CD4-positive, alpha-beta T cell (primary cell): ENCODE measurements at regions of chr1 and their contacts with region 1.

Region 1: DNA sequence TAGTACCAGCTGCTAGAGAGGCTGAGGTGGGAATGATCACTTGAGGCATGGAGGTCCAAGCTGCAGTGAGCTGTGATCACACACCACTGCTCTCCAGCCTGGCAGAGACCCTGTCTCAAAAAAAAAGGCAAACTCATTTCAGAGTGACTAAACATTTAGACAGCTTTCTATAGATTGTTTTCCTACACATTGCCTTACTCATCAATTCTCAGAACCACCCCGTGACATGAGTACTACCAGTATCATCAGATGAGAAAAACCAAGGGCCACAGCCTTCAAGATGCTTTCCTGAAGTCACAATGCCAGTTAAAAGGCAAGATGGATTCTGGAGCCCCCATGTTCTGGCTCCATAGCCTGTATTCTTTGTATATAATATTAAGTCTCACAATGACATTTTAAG is 22.4 kb upstream of the SMPDL3B start:
- DNase-seq: no peak
- ATAC-seq: no peak
- H3K4me3 ChIP-seq: no peak overlapping the region
- H3K4me3 Mint-ChIP-seq: peak overlapping the region; percentile 75
- H3K27ac ChIP-seq: no peak overlapping the region
- H3K27ac Mint-ChIP-seq: peak overlapping the region; percentile 59
- H3K4me1 ChIP-seq: peaks cover 33% of the 10 kb centered on the region
- H3K4me1 Mint-ChIP-seq: peaks cover 23% of the 10 kb centered on the region
- H3K27me3 ChIP-seq: no peaks in the 10 kb centered on the region
- H3K27me3 Mint-ChIP-seq: no peaks in the 10 kb centered on the region
- CTCF ChIP-seq: no peak

Region 2: DNA sequence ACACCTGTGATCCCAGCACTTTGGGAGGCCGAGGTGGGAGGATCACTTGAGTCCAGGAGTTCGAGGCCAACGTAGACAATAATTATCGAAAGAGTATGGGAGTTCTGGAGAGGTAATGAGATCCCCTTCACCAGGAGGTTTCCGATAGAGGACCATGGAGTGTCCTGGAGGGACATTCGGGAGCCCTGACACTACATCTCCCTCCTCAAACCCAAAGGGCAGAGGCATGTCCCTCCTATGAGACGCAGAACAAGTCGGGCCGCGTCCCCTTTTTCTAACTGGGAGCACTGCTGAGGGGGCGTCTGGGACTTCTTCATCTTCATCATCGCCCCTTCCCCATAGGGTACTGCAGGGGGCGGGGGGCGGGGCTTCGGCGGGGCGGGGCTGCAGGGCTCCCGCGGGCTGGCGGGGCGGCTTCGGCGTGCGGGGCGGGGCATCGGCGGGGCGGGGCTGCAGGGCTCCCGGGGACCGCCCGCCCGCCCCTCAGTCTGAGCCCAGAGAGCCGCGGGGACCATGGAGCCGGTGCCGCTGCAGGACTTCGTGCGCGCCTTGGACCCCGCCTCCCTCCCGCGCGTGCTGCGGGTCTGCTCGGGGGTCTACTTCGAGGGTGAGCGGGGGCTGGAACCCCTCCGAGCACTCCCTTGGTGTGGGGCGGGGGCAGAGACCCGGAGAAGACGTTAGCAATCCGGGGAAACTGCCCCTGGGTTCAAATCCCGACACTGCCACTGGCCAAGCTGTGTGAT is 40.2 kb before region 1 on chr1 and contains the start of gene THEMIS2:
- CTCF ChIA-PET with region 1: no interaction called
- POLR2A ChIA-PET with region 1: no interaction called
- intact Hi-C with region 1: loop called in 1 of 2 experiments (anchors 2 kb)
- DNase-seq: peak; percentile 66 to 92 (median 78)
- ATAC-seq: peak; percentile 78
- H3K4me3 ChIP-seq: peak within 1 kb of the TSS; percentile 88
- H3K4me3 Mint-ChIP-seq: peak within 1 kb of the TSS; percentile 100
- H3K27ac ChIP-seq: peak within 1 kb of the TSS; percentile 24 to 51
- H3K27ac Mint-ChIP-seq: peak within 1 kb of the TSS; percentile 85
- H3K4me1 ChIP-seq: peaks cover 85% of the 10 kb centered on the region
- H3K4me1 Mint-ChIP-seq: peaks cover 36% of the 10 kb centered on the region
- H3K27me3 ChIP-seq: no peaks in the 10 kb centered on the region
- H3K27me3 Mint-ChIP-seq: no peaks in the 10 kb centered on the region
- CTCF ChIP-seq: no peak
- total RNA-seq, gene THEMIS2: 20.2 to 21.6 TPM

Region 3: GRCh38 chr1:27940297-27940696 is 27.9 kb after region 1 on chr1:
- CTCF ChIA-PET with region 1: no interaction called
- POLR2A ChIA-PET with region 1: no interaction called
- intact Hi-C with region 1: no loop called
- DNase-seq: peak; percentile 63 to 90 (median 74)
- ATAC-seq: peak; percentile 90
- H3K4me3 ChIP-seq: no peak overlapping the region
- H3K4me3 Mint-ChIP-seq: no peak overlapping the region
- H3K27ac ChIP-seq: peak overlapping the region in 1 of 2 donors; percentile 20
- H3K27ac Mint-ChIP-seq: peak overlapping the region; percentile 38
- H3K4me1 ChIP-seq: peaks cover 45% of the 10 kb centered on the region
- H3K4me1 Mint-ChIP-seq: peaks cover 29% of the 10 kb centered on the region
- H3K27me3 ChIP-seq: peaks cover 0 to under 1% of the 10 kb centered on the region in 2 experiments
- H3K27me3 Mint-ChIP-seq: peaks cover 6% of the 10 kb centered on the region
- CTCF ChIP-seq: peak; percentile 79